Lower leg skin (tissue), 4 donors: ENCODE measurements at regions of chr12 and their contacts with region 1.

Region 1: GRCh38 chr12:75511116-75512048 is at the start of gene KRR1:
- DNase-seq: peak; percentile 93 to 97
- H3K4me3 ChIP-seq: peak within 1 kb of the TSS; percentile 74
- CTCF ChIP-seq: no peak
- POLR2A ChIP-seq: no peak
- total RNA-seq, gene KRR1: 21.3 to 52.3 (median 32.0) TPM

Region 2: GRCh38 chr12:76374386-76375020 is 863.1 kb after region 1 on chr12:
- intact Hi-C with region 1: loop called (anchors 10 kb)
- DNase-seq: no peak
- H3K4me3 ChIP-seq: no peak overlapping the region
- CTCF ChIP-seq: no peak
- POLR2A ChIP-seq: no peak